Activated CD4-positive, alpha-beta T cell treated with anti-CD3 and anti-CD28 coated beads, Interleukin-2, amount 10 ng/mL, durations not matched to agents 24 days and 14 days (primary cell): ENCODE measurements at regions of chr11 and their contacts with region 1.

Region 1: DNA sequence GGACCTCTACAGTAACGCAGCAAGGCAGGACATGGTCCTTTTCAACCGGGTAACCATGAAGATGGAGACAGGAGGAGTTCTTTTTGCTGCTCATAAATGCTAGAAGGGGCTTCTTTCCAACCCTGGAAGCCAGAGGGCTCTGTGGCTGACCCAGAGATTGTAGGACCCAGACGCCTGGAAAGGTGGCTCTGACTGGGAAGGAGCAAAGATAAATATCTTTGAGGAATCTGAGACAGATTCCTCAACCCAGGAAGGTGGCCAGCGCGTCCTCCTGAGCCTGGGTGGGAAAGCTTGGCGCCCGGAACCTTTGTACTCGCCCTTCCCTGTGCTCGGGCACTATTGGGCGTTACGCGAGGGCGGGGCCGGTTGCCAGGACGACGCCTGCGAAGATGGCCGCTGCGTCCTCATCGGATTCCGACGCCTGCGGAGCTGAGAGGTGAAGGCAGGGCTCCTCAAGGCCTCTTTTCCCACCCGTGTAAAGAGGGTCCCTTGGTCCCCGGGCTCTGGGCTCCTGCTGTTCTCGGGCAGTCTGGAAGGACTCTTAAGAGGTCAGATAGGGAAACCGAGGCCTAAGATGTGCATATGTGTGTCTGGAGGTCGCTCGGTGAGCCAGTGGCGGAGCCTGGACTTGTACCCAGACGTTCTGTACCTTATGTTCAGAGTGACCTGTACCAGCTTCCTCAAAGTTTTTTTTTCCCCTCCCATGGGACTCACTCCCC is at the start of gene BBS1:
- DNase-seq: peak; percentile 95
- H3K4me3 Mint-ChIP-seq: peak within 1 kb of the TSS; percentile 91
- H3K27ac Mint-ChIP-seq: peak within 1 kb of the TSS; percentile 67
- H3K4me1 Mint-ChIP-seq: peaks cover 17% of the 10 kb centered on the region
- H3K27me3 Mint-ChIP-seq: no peaks in the 10 kb centered on the region
- total RNA-seq, gene BBS1: 17.6 and 18.3 TPM in 2 replicates

Region 2: GRCh38 chr11:66545701-66546367 is 35.4 kb after region 1 on chr11 and contains the start of gene ZDHHC24:
- intact Hi-C with region 1: loop called (anchors 1 kb)
- DNase-seq: peak; percentile 97
- H3K4me3 Mint-ChIP-seq: peak within 1 kb of the TSS; percentile 89
- H3K27ac Mint-ChIP-seq: peak within 1 kb of the TSS; percentile 80
- H3K4me1 Mint-ChIP-seq: peaks cover 17% of the 10 kb centered on the region
- H3K27me3 Mint-ChIP-seq: peaks cover 13% of the 10 kb centered on the region
- total RNA-seq, gene ZDHHC24: 12.2 and 13.9 TPM in 2 replicates